Esophagus muscularis mucosa (tissue), 4 donors: ENCODE measurements at regions of chr1 and their contacts with region 1.

Region 1: GRCh38 chr1:65687428-65688214 is 105.1 kb upstream of the PDE4B start:
- DNase-seq: peak; percentile 94
- H3K4me3 ChIP-seq: no peak overlapping the region
- H3K27ac ChIP-seq: no peak overlapping the region
- H3K4me1 ChIP-seq: peaks cover 10 to 22% (median 18%) of the 10 kb centered on the region in 4 donors
- H3K27me3 ChIP-seq: no peaks in the 10 kb centered on the region
- CTCF ChIP-seq: peak; percentile 93 to 96 (median 96)
- EP300 ChIP-seq: no peak
- POLR2A ChIP-seq: no peak

Region 2: GRCh38 chr1:65235867-65236805 is 451.5 kb before region 1 on chr1:
- intact Hi-C with region 1: loop called (anchors 5 kb)
- DNase-seq: no peak
- H3K4me3 ChIP-seq: no peak overlapping the region
- H3K27ac ChIP-seq: no peak overlapping the region
- H3K4me1 ChIP-seq: no peaks in the 10 kb centered on the region
- H3K27me3 ChIP-seq: no peaks in the 10 kb centered on the region
- CTCF ChIP-seq: peak; percentile 44 to 57 (median 44)
- EP300 ChIP-seq: no peak
- POLR2A ChIP-seq: no peak

Region 3: GRCh38 chr1:65431111-65431705 is 256.4 kb before region 1 on chr1:
- intact Hi-C with region 1: loop called (anchors 5 kb)
- DNase-seq: no peak
- H3K4me3 ChIP-seq: no peak overlapping the region
- H3K27ac ChIP-seq: peak overlapping the region in 1 of 4 donors; percentile 5
- H3K4me1 ChIP-seq: peaks cover 4 to 30% (median 22%) of the 10 kb centered on the region in 4 donors
- H3K27me3 ChIP-seq: no peaks in the 10 kb centered on the region
- CTCF ChIP-seq: peak; percentile 42 to 62 (median 52)
- EP300 ChIP-seq: no peak
- POLR2A ChIP-seq: no peak

Region 4: DNA sequence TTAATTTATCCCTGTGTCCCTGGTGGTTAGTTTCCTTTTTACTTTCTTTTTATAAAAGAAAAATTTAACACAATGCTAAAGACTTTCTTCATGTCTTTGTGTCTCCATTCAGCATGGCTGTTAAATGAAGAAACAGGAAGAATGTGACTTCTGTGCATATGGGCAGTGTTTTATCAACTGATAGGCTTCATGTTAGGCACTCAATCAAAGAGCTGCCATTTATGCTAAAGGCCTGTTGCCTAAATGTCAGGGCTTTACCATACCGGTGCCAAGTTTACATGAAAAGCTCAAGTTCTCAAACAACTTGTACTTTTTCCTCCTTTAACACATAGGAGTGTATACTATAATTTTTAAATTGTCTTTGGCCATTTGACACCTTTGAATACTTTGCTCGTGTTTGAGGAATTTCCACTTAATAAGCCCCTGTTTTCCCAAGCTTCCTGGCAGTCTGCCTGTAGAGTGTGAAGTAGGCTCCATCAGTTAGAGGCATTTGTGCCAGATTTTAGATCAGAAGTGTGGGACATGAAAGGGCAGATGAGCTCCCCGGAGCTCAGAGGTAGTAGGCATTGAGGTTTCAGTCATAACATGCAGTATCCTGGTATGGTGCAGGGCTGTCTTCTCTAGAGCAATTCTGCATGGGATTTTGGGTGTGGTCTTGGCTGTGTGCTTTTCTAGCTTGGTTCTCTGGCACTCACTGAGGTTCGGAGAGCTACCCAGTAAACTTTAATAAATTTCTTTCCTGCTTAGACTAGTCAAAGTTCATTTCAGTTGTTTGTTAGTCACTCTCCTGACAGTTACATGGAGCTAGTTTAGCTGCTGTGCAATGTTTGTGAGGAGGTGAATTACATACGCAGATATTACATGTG is 148.1 kb before region 1 on chr1:
- intact Hi-C with region 1: no loop called
- DNase-seq: no peak
- H3K4me3 ChIP-seq: no peak overlapping the region
- H3K27ac ChIP-seq: no peak overlapping the region
- H3K4me1 ChIP-seq: peaks cover 0 to 11% (median 5%) of the 10 kb centered on the region in 4 donors
- H3K27me3 ChIP-seq: no peaks in the 10 kb centered on the region
- CTCF ChIP-seq: no peak
- EP300 ChIP-seq: no peak
- POLR2A ChIP-seq: no peak

Region 5: GRCh38 chr1:66073388-66073787 is 385.8 kb after region 1 on chr1:
- intact Hi-C with region 1: no loop called
- DNase-seq: no peak
- H3K4me3 ChIP-seq: no peak overlapping the region
- H3K27ac ChIP-seq: no peak overlapping the region
- H3K4me1 ChIP-seq: no peaks in the 10 kb centered on the region
- H3K27me3 ChIP-seq: no peaks in the 10 kb centered on the region
- CTCF ChIP-seq: no peak
- EP300 ChIP-seq: no peak
- POLR2A ChIP-seq: no peak